ENCODE measurements at regions of chr17 and their contacts with region 1.

Region 1: GRCh38 chr17:2025622-2026310 is 632 bp upstream of the RTN4RL1 start:
- DNase-seq: peak; percentile 41
- ATAC-seq: no peak
- H3K4me3 Mint-ChIP-seq: peak overlapping the region; percentile 66
- H3K27ac Mint-ChIP-seq: no peak overlapping the region
- H3K4me1 Mint-ChIP-seq: peaks cover 30% of the 10 kb centered on the region
- H3K27me3 Mint-ChIP-seq: peaks cover 55% of the 10 kb centered on the region

Region 2: GRCh38 chr17:1908699-1909309 is 117.0 kb before region 1 on chr17:
- CTCF ChIA-PET with region 1: interaction called, 21 read pairs
- POLR2A ChIA-PET with region 1: interaction called, 4 read pairs
- DNase-seq: peak; percentile 59
- ATAC-seq: peak; percentile 80
- H3K4me3 Mint-ChIP-seq: no peak overlapping the region
- H3K27ac Mint-ChIP-seq: no peak overlapping the region
- H3K4me1 Mint-ChIP-seq: peaks cover 9% of the 10 kb centered on the region
- H3K27me3 Mint-ChIP-seq: peaks cover 50% of the 10 kb centered on the region

Region 3: DNA sequence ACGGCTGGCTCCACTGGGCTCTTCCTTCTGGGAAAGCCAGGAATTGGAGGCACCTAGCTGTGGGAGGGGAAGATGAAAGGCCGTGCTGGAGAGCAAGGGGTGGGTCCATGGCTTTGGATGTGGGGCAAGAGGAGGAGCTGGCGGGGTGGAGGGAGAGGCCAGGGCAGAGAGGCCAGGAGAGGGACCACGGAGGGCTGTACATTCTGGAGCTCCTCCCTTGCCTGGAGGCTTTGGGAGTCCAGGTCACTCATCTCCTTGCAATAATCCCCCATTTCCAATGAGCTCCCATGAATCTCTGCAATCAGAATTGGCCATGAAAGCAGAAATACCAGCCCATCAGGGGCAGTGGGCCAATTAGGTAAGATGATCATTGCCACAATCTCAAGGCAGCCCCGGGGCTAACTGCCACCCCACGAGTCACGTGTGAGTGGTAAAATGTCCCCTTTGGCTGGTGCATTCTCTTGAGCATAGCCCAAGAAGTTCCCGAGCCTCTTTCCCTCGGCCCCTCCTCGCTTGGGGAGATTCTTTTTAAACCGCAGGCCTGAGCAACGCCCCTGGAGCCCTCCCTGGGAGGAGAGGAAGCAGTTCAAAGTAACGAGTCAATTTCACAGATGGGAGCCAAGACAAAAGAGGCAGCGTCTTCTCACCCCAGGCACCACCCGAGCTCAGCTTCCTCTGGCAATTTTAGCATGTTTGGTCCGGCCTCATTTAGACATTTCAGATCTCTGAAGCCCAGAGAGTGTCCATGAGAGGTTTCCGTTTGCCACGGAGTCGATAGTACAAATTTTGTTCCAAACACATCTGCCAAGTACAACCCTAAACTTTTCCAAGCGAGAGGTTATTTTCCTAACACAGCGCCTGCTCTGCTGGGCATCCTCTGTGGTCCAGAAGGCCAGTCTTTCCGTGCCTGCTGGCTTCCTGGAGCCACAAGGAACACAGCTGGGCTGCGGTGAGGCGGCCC is 14.1 kb before region 1 on chr17:
- CTCF ChIA-PET with region 1: no interaction called
- POLR2A ChIA-PET with region 1: no interaction called
- DNase-seq: no peak
- ATAC-seq: no peak
- H3K4me3 Mint-ChIP-seq: no peak overlapping the region
- H3K27ac Mint-ChIP-seq: no peak overlapping the region
- H3K4me1 Mint-ChIP-seq: no peaks in the 10 kb centered on the region
- H3K27me3 Mint-ChIP-seq: peaks cover 2% of the 10 kb centered on the region